Ovary (tissue), 10 donors: ENCODE measurements at regions of chr15 and their contacts with region 1.

Region 1: DNA sequence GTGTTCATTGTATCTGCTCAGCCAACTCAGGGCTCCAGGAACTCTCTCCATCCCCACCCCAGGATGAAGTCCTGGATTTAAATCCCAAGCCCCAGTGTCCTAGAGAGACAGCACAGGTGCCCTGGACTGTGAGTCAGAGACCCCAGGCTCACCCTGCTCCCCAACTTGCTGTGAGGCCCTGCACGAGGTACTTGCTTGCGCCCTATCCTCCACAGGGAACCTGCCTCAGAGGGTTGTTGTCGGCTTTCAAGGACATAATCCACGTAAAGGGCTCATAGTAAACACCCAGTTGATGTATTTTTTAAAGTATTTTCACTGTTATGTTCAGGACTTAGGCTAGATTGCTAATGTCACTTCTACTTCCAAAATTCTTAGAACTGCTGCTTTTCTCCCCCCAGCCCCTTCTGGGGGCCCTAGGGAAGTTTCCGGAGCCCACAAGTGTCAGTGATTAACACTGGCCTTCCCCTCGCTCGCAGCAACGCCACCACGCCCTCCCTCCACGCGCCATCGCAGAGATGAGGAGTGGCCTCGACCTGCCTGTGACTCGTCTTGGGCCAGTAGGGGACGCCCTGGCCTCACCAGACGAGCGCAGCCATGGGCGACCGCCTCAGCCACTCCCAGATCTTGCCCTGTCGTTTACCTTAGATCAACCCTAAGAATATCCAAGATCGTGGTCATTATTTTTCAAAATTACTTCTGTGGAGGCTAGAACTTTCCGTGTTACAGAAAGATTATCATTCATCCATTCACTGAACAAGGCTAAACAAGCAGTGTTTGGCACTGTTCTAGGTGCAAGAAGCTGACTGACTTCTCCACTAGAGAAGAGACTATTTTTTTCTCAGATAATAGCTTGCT is 6.0 kb upstream of the SRP14 start:
- DNase-seq: peak; percentile 84 to 90 (median 89)
- H3K4me3 ChIP-seq: no peak overlapping the region
- H3K27ac ChIP-seq: peak overlapping the region; percentile 7 to 59
- H3K4me1 ChIP-seq: peaks cover 11% of the 10 kb centered on the region
- H3K27me3 ChIP-seq: no peaks in the 10 kb centered on the region
- CTCF ChIP-seq: peak; percentile 83 to 93 (median 93)
- EP300 ChIP-seq: no peak
- POLR2A ChIP-seq: no peak

Region 2: GRCh38 chr15:40108855-40109735 is 64.2 kb after region 1 on chr15 and contains the start of gene BMF:
- intact Hi-C with region 1: loop called in 3 of 4 experiments (anchors 2 to 10 kb)
- DNase-seq: peak; percentile 100
- H3K4me3 ChIP-seq: peak within 1 kb of the TSS; percentile 92
- H3K27ac ChIP-seq: peak within 1 kb of the TSS; percentile 50 to 91
- H3K4me1 ChIP-seq: peaks cover 21% of the 10 kb centered on the region
- H3K27me3 ChIP-seq: no peaks in the 10 kb centered on the region
- CTCF ChIP-seq: peak in 2 of 3 donors; percentile 16 to 28
- EP300 ChIP-seq: no peak
- POLR2A ChIP-seq: no peak
- total RNA-seq, gene BMF: 5.7 to 26.5 (median 20.3) TPM

Region 3: GRCh38 chr15:40160689-40161688 is 116.0 kb after region 1 on chr15 and contains the start of gene BUB1B:
- intact Hi-C with region 1: loop called in 1 of 4 experiments (anchors 10 kb)
- DNase-seq: peak; percentile 88 to 93 (median 92)
- H3K4me3 ChIP-seq: peak within 1 kb of the TSS; percentile 40
- H3K27ac ChIP-seq: no peak within 1 kb of the TSS
- H3K4me1 ChIP-seq: peaks cover 5% of the 10 kb centered on the region
- H3K27me3 ChIP-seq: no peaks in the 10 kb centered on the region
- CTCF ChIP-seq: no peak
- EP300 ChIP-seq: no peak
- POLR2A ChIP-seq: no peak
- total RNA-seq, gene BUB1B: 0.43 to 2.4 (median 1.1) TPM in 6 of 7 donors, not detected in the other

Region 4: GRCh38 chr15:40217159-40217824 is 172.3 kb after region 1 on chr15:
- intact Hi-C with region 1: loop called in 1 of 4 experiments (anchors 5 kb)
- DNase-seq: peak in 1 of 5 donors; percentile 35
- H3K4me3 ChIP-seq: no peak overlapping the region
- H3K27ac ChIP-seq: no peak overlapping the region
- H3K4me1 ChIP-seq: no peaks in the 10 kb centered on the region
- H3K27me3 ChIP-seq: no peaks in the 10 kb centered on the region
- CTCF ChIP-seq: peak; percentile 60 to 80 (median 67)
- EP300 ChIP-seq: no peak
- POLR2A ChIP-seq: no peak

Region 5: GRCh38 chr15:40274350-40275274 is 229.7 kb after region 1 on chr15:
- intact Hi-C with region 1: loop called (anchors 2 to 10 kb)
- DNase-seq: peak; percentile 70 to 87 (median 84)
- H3K4me3 ChIP-seq: no peak overlapping the region
- H3K27ac ChIP-seq: no peak overlapping the region
- H3K4me1 ChIP-seq: peaks cover 3% of the 10 kb centered on the region
- H3K27me3 ChIP-seq: no peaks in the 10 kb centered on the region
- CTCF ChIP-seq: peak; percentile 99 to 100 (median 99)
- EP300 ChIP-seq: no peak
- POLR2A ChIP-seq: peak; percentile 12

Region 6: GRCh38 chr15:40421246-40422157 is 376.6 kb after region 1 on chr15:
- intact Hi-C with region 1: loop called in 1 of 4 experiments (anchors 10 kb)
- DNase-seq: peak; percentile 73 to 87 (median 83)
- H3K4me3 ChIP-seq: no peak overlapping the region
- H3K27ac ChIP-seq: peak overlapping the region in 1 of 2 donors; percentile 58
- H3K4me1 ChIP-seq: peaks cover 14% of the 10 kb centered on the region
- H3K27me3 ChIP-seq: no peaks in the 10 kb centered on the region
- CTCF ChIP-seq: peak; percentile 86 to 94 (median 90)
- EP300 ChIP-seq: no peak
- POLR2A ChIP-seq: no peak